Activated CD4-positive, alpha-beta memory T cell treated with anti-CD3 and anti-CD28 coated beads for 36 hours (primary cell): ENCODE measurements at regions of chr14 and their contacts with region 1.

Region 1: GRCh38 chr14:20970983-20971704 is 15.9 kb downstream of the RNASE2 start:
- DNase-seq: peak; percentile 86
- H3K4me3 Mint-ChIP-seq: peak overlapping the region; percentile 84
- H3K27ac Mint-ChIP-seq: no peak overlapping the region
- H3K4me1 Mint-ChIP-seq: peaks cover 11% of the 10 kb centered on the region
- H3K27me3 Mint-ChIP-seq: peaks cover 25% of the 10 kb centered on the region

Region 2: DNA sequence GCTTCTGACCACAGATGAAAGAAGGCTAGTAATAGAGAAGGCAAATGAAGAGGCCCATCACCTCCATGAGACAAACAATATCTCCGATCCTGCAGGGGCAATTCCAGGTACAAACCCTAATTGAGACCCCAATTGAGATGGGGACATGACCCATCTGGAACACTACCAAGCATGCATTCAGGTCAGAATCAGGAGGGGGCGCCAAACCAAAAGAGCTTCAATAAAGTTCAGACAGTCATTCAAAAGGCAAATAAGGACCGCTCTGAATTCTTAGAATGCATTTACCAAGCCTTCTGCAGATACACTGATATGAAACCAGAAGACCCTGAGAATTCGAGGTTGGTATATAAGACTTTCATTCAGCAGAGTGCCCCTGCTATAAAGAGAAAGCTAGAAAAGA is 213.2 kb before region 1 on chr14:
- CTCF ChIA-PET with region 1: interaction called, 4 read pairs
- POLR2A ChIA-PET with region 1: no interaction called
- intact Hi-C with region 1: loop called (anchors 10 kb)
- DNase-seq: peak; percentile 51
- H3K4me3 Mint-ChIP-seq: no peak overlapping the region
- H3K27ac Mint-ChIP-seq: no peak overlapping the region
- H3K4me1 Mint-ChIP-seq: no peaks in the 10 kb centered on the region
- H3K27me3 Mint-ChIP-seq: peaks cover 2% of the 10 kb centered on the region

Region 3: DNA sequence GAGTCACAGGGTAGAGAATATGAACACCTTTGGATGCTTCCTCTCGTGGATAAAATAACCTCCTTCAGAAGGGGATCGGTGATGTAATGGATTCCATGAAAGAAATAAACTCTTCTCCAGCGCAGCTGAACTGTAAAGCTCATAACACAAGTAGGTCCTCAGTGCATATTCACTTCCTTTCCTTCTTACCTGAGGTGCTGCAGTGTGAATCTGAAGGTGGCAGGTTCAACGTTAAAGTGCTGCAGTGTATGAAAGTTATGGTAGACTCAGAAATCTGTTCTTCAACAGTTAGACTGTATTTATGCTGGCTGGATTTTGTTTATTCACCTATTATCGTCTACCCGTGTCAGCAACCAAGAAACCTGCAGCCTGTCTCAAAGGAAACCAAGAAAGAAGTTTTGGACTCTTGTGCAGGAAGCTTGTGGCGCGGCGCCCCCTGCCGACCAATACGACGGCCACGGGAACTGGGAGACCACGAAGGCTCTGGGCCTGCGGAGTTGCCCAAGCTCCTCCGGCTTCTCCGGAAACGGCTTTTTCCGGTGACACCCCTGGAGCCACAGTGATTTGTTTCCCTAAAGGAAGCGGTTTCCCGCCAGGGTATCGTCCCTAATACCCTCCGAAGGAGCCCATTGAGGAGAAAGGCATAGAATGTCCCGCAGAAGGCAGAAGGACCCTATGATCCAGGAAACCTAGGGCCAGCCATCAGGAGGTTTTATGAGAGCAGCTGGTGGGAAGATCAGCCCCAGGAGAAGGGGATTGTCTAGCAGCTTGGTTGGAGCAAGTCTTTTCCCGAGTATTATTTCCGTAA is 97.6 kb before region 1 on chr14:
- CTCF ChIA-PET with region 1: interaction called, 13 read pairs
- POLR2A ChIA-PET with region 1: no interaction called
- intact Hi-C with region 1: loop called (anchors 5 kb)
- DNase-seq: peak; percentile 91
- H3K4me3 Mint-ChIP-seq: peak overlapping the region; percentile 13
- H3K27ac Mint-ChIP-seq: no peak overlapping the region
- H3K4me1 Mint-ChIP-seq: peaks cover 15% of the 10 kb centered on the region
- H3K27me3 Mint-ChIP-seq: no peaks in the 10 kb centered on the region

Region 4: DNA sequence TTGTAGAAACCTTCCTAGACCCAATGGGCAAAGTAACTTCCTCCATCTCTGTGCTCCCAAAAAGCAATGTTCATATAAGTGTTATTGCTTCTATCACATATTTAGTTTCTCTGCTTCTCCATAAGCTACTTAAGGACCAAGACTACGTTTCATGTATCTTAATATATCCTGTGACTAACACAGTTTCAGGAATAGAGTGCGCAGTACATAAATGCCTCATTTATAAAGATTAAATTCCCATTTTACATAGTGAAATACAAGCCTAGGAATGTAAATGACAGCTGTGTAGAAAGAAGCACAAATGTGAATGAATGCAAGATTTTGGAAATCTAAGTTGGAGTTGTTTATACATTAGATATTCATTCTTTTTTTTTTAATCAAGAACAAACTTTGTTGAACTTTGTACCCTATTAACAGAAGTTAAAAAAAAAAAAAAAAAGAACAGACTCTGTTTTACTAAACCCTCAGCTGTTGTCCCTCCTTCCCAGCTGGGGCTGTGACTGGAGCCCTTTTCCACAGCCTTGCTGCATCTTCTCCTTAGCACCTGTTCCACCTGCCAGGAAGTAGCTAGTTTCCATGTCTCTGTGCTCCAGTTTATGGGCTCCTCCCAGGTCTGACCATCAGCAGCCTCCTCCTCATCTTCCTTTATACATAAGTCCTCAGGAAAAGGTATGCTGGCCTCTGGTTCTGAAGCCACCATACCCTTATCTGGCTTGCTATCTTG is 11.7 kb after region 1 on chr14:
- CTCF ChIA-PET with region 1: interaction called, 52 read pairs
- POLR2A ChIA-PET with region 1: no interaction called
- intact Hi-C with region 1: no loop called
- DNase-seq: no peak
- H3K4me3 Mint-ChIP-seq: no peak overlapping the region
- H3K27ac Mint-ChIP-seq: no peak overlapping the region
- H3K4me1 Mint-ChIP-seq: peaks cover 3% of the 10 kb centered on the region
- H3K27me3 Mint-ChIP-seq: peaks cover 3% of the 10 kb centered on the region

Region 5: GRCh38 chr14:20998664-20999366 is 27.7 kb after region 1 on chr14 and contains the start of gene SLC39A2:
- CTCF ChIA-PET with region 1: interaction called, 22 read pairs
- POLR2A ChIA-PET with region 1: no interaction called
- intact Hi-C with region 1: no loop called
- DNase-seq: no peak
- H3K4me3 Mint-ChIP-seq: no peak within 1 kb of the TSS
- H3K27ac Mint-ChIP-seq: no peak within 1 kb of the TSS
- H3K4me1 Mint-ChIP-seq: peaks cover 7% of the 10 kb centered on the region
- H3K27me3 Mint-ChIP-seq: no peaks in the 10 kb centered on the region
- total RNA-seq, gene SLC39A2: 0.17 TPM in 1 of 2 experiments, not detected in the other